GM12878 (cell line): ENCODE measurements at regions of chr1 and their contacts with region 1.

Region 1: GRCh38 chr1:162040681-162041080 is 17.0 kb upstream of the OLFML2B start:
- DNase-seq: no peak
- ATAC-seq: peak; percentile 32; the same call in 1 of the 3 replicates
- H3K4me3 ChIP-seq: no peak overlapping the region
- H3K27ac ChIP-seq: no peak overlapping the region
- H3K4me1 ChIP-seq: no peaks in the 10 kb centered on the region
- H3K27me3 ChIP-seq: no peaks in the 10 kb centered on the region
- CTCF ChIP-seq: peak; percentile 24 to 36 (median 30); a peak in 3 of 6 replicates
- EP300 ChIP-seq: no peak
- POLR2A ChIP-seq: no peak
- RAD21 ChIP-seq: no peak

Region 2: DNA sequence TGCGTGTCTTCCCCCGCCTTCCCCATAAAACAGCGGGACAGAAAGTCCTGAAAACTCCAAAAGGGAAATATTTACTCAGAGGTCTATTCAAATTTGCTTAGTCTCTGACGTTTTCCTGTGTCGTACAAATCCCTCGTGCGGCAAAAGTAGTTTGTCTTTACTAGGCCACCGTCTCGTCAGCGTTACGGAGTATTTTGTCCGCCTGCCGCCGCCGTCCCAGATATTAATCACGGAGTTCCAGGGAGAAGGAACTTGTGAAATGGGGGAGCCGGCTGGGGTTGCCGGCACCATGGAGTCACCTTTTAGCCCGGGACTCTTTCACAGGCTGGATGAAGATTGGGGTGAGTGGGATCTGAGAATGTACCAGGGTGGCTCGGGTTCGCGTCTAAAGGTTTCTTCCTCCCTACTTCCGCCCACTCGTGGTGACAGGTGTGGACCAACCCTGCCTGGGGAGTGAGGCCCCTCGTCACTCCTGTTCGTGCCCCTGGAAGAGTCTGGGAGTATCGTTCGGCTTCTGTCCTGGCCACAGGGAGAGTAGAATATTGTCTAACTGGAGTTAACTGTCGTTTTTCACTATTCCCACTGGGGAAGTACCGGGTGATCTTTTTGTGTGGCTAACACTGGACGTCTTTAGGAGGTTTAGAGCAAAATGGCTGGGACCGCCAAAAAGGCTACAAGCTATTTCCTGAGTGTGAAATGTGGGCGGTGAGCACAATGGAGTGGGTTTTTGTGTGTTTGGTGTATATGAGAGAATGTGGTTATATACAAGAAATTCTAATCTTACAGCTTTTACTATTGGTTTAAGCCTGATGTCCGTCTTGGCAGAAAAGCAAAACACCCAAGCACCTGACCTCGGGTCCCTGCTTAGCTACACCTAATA is 274.3 kb before region 1 on chr1 and contains the start of gene ATF6:
- CTCF ChIA-PET with region 1: interaction called, 14 read pairs
- POLR2A ChIA-PET with region 1: no interaction called
- RAD21 ChIA-PET with region 1: interaction called, 8 read pairs
- SMC1A ChIA-PET with region 1: interaction called, 7 read pairs
- in situ Hi-C with region 1: no loop called
- intact Hi-C with region 1: no loop called
- DNase-seq: peak; percentile 72
- ATAC-seq: peak; percentile 76
- H3K4me3 ChIP-seq: peak within 1 kb of the TSS; percentile 92
- H3K27ac ChIP-seq: peak within 1 kb of the TSS; percentile 93
- H3K4me1 ChIP-seq: peaks cover 13% of the 10 kb centered on the region
- H3K27me3 ChIP-seq: no peaks in the 10 kb centered on the region
- CTCF ChIP-seq: no peak
- EP300 ChIP-seq: peak in 1 of 2 experiments; percentile 21; a peak in 1 of 4 replicates
- POLR2A ChIP-seq: peak; percentile 70
- RAD21 ChIP-seq: no peak
- polyA plus RNA-seq, gene ATF6: 7.8 to 8.9 TPM

Region 3: DNA sequence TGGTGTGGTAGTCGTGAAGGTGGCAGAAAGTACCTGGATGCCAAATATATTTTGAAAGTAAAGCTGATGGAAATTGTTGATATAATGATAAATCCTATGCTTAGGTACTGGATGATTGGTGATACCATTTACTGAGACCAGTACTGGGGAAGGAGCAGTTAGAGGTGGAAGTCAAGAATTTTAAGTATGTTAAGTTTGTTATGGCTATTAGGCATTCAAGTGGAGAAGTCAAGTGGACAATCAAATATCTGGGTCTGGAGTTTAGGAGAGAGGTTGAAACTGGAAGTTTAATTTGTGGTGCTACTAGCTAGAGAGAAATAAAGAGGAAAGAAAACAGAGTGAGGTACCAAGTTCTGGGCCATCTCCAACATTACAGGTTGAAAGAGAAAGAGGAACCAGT is 185.4 kb before region 1 on chr1:
- CTCF ChIA-PET with region 1: interaction called, 12 read pairs
- POLR2A ChIA-PET with region 1: no interaction called
- RAD21 ChIA-PET with region 1: interaction called, 13 read pairs
- SMC1A ChIA-PET with region 1: interaction called, 3 read pairs
- in situ Hi-C with region 1: no loop called
- intact Hi-C with region 1: no loop called
- DNase-seq: no peak
- ATAC-seq: no peak
- H3K4me3 ChIP-seq: no peak overlapping the region
- H3K27ac ChIP-seq: no peak overlapping the region
- H3K4me1 ChIP-seq: no peaks in the 10 kb centered on the region
- H3K27me3 ChIP-seq: no peaks in the 10 kb centered on the region
- CTCF ChIP-seq: no peak
- EP300 ChIP-seq: no peak
- POLR2A ChIP-seq: no peak
- RAD21 ChIP-seq: no peak

Region 4: GRCh38 chr1:161864577-161864976 is 176.1 kb before region 1 on chr1:
- CTCF ChIA-PET with region 1: interaction called, 12 read pairs
- POLR2A ChIA-PET with region 1: no interaction called
- RAD21 ChIA-PET with region 1: interaction called, 15 read pairs
- SMC1A ChIA-PET with region 1: interaction called, 5 read pairs
- in situ Hi-C with region 1: no loop called
- intact Hi-C with region 1: no loop called
- DNase-seq: no peak
- ATAC-seq: no peak
- H3K4me3 ChIP-seq: no peak overlapping the region
- H3K27ac ChIP-seq: no peak overlapping the region
- H3K4me1 ChIP-seq: no peaks in the 10 kb centered on the region
- H3K27me3 ChIP-seq: no peaks in the 10 kb centered on the region
- CTCF ChIP-seq: peak in 1 of 3 experiments; percentile 23; a peak in 1 of 6 replicates
- EP300 ChIP-seq: no peak
- POLR2A ChIP-seq: no peak
- RAD21 ChIP-seq: no peak

Region 5: DNA sequence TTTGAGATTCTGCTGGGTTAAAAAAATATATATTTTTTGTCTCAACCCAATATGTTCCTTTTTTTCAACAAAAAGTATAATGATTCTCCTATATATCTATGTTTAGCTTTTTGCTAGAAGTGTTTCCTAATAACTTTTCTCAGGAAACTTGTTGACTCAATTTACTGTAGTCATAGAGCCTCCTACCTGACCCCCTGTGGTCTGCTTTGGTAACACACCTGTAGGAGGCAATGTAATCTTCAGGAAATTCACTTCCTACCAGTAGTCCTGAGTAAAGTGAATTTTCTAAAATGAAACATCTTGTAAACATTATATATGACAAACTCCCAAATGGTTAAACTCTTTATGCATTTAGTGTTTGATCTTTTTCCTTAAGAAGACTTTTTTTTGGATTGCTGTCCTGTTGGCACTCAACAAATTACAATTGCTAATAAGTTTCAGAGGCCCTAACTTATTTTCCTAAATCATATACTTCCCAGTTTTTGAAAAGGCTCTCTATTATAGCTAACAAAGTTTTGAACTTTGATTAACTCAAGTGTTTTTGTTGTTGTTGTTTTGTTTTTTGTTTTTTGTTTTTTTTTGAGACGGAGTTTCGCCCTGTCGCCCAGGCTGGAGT is 135.3 kb before region 1 on chr1:
- CTCF ChIA-PET with region 1: interaction called, 26 read pairs
- POLR2A ChIA-PET with region 1: no interaction called
- RAD21 ChIA-PET with region 1: interaction called, 8 read pairs
- SMC1A ChIA-PET with region 1: interaction called, 11 read pairs
- in situ Hi-C with region 1: no loop called
- intact Hi-C with region 1: no loop called
- DNase-seq: no peak
- ATAC-seq: peak; percentile 91
- H3K4me3 ChIP-seq: no peak overlapping the region
- H3K27ac ChIP-seq: no peak overlapping the region
- H3K4me1 ChIP-seq: 0 out of 2 replicates have a peak, but pooled peaks cover 4% of the 10 kb centered on the region
- H3K27me3 ChIP-seq: no peaks in the 10 kb centered on the region
- CTCF ChIP-seq: peak; percentile 45 to 68 (median 53)
- EP300 ChIP-seq: no peak
- POLR2A ChIP-seq: no peak
- RAD21 ChIP-seq: peak; percentile 49

Region 6: GRCh38 chr1:162107911-162108310 is 67.2 kb after region 1 on chr1:
- CTCF ChIA-PET with region 1: no interaction called
- POLR2A ChIA-PET with region 1: no interaction called
- RAD21 ChIA-PET with region 1: no interaction called
- SMC1A ChIA-PET with region 1: no interaction called
- in situ Hi-C with region 1: no loop called
- intact Hi-C with region 1: no loop called
- DNase-seq: no peak
- ATAC-seq: no peak
- H3K4me3 ChIP-seq: no peak overlapping the region
- H3K27ac ChIP-seq: no peak overlapping the region
- H3K4me1 ChIP-seq: no peaks in the 10 kb centered on the region
- H3K27me3 ChIP-seq: no peaks in the 10 kb centered on the region; a peak in 1 of 4 replicates
- CTCF ChIP-seq: no peak
- EP300 ChIP-seq: no peak
- POLR2A ChIP-seq: no peak
- RAD21 ChIP-seq: no peak